Dendritic cell treated with granulocyte-macrophage colony-stimulating factor and Interleukin-4, amounts not matched to agents 40 ng/mL and 50 ng/mL, for 4 days (primary cell): ENCODE measurements at regions of chr13 and their contacts with region 1.

Region 1: GRCh38 chr13:33723772-33724435 is 94.0 kb upstream of the RFC3 start:
- H3K4me3 Mint-ChIP-seq: no peak overlapping the region
- H3K27ac Mint-ChIP-seq: no peak overlapping the region
- H3K4me1 Mint-ChIP-seq: peaks cover 27% of the 10 kb centered on the region
- H3K27me3 Mint-ChIP-seq: no peaks in the 10 kb centered on the region

Region 2: GRCh38 chr13:32586080-32586900 is 1137.6 kb before region 1 on chr13 and contains the start of gene PDS5B:
- intact Hi-C with region 1: loop called (anchors 5 kb)
- H3K4me3 Mint-ChIP-seq: peak within 1 kb of the TSS; percentile 92
- H3K27ac Mint-ChIP-seq: peak within 1 kb of the TSS; percentile 89
- H3K4me1 Mint-ChIP-seq: peaks cover 37% of the 10 kb centered on the region
- H3K27me3 Mint-ChIP-seq: peaks cover 8% of the 10 kb centered on the region

Region 3: DNA sequence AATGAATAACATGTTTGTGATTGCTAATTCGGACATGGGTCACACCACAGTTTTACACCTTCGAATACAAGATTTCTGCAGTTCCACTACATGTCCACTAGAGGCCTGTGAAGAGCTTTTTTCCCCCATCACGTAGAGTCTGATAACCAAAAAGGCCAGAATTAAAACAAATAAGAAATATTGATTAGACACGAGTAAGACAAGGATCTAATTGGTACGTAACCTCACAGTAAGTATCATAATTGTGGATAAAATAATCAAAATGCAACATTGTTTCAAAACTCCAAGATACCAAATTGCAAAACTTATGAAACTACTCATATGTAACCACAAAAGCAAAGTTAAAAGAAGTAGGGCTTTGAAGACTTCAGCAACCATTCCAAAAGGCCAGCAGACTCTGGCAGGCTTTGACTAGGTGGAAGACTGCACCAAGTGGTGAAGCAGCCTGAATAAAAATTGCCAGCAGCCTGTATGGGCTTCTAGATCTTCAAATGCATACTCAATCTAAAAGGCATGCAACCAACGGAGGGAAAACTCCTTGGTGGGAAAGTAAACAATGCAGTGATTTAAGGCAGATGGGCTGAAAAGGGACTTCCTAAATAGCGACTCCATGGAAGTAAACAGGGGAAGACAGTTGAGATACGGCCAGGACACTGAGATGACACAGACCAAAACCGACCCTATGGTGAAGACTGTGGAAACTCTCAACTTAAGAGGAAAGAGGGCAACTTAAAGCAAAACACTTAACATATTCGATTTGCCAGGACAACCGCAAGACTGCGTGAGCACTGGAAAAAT is 495.1 kb before region 1 on chr13:
- intact Hi-C with region 1: loop called (anchors 2 kb)
- H3K4me3 Mint-ChIP-seq: no peak overlapping the region
- H3K27ac Mint-ChIP-seq: no peak overlapping the region
- H3K4me1 Mint-ChIP-seq: peaks cover 13% of the 10 kb centered on the region
- H3K27me3 Mint-ChIP-seq: no peaks in the 10 kb centered on the region

Region 4: DNA sequence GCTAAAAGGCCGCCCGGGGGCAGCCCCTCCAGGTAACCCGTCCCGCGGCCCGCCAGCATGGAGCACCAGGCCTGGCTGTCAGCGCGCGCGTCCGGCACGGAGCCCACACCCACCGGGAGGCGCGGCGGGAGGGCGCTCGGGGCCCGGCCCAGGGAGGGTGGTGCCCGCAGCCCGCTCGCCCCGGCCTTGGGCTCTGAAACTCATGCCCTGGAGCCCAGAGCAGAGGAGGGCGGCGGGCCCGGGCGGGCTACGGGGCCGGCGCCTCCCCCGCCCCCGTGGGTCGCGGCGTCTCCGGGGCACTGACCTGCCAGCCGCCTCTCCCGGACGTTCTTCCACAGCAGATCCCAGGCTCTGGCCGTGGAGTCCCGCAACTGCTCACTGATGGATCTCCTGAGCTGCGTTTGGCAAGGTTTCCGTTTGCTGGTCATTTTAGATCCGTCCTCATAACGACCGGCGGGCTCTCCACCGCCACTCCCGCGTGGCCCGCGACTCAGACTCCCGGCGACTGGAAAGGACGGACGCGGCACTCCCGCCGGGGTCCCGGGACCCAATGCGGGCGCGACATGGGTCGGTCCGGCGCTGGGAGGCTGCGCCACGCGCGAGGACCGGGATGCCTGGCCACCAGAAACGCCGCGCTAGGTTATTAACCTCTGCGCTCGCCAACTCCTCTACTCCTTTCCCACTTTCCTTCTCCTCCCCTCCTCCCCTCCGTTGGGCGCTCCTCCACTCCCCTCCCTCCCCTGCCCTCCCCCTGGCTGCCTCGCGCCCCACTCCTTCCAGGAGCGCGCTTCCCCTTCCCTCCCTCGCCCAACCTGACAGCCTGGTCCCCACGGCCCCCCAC is 373.7 kb before region 1 on chr13:
- intact Hi-C with region 1: loop called (anchors 5 kb)
- H3K4me3 Mint-ChIP-seq: peak overlapping the region; percentile 88
- H3K27ac Mint-ChIP-seq: peak overlapping the region; percentile 84
- H3K4me1 Mint-ChIP-seq: peaks cover 51% of the 10 kb centered on the region
- H3K27me3 Mint-ChIP-seq: peaks cover 11% of the 10 kb centered on the region

Region 5: DNA sequence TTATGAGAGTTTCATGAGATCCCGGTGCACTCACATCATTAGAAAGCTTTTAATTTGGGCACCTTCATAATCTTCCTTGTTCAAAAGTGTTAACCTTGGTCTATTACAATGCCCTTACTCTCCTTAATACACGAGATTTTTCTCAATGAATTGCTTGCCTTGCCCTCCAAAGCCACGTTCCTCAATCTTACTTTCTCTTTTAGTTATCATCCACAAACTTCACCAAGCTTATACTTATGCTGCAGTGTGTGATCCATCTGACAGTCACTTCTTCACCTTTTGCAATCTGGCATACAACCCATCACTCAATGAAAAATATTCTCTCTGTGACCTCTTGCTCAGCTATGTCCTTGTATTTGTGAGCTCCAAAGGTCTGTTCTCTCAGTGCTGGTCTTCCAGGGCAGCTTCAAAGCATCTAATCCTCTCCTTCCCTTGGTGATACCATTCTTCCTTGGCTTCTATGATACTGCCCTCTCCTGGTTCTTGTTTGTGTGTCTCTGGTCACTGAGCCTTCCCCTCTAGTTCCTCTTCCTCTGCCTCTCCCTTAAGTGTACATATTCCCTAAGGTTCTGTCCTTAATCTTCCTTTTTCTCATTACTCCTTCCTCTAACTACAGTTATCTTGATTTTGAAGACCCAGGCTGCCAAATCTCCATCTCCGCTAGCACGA is 236.2 kb before region 1 on chr13:
- intact Hi-C with region 1: loop called (anchors 5 kb)
- H3K4me3 Mint-ChIP-seq: no peak overlapping the region
- H3K27ac Mint-ChIP-seq: no peak overlapping the region
- H3K4me1 Mint-ChIP-seq: peaks cover 9% of the 10 kb centered on the region
- H3K27me3 Mint-ChIP-seq: no peaks in the 10 kb centered on the region

Region 6: DNA sequence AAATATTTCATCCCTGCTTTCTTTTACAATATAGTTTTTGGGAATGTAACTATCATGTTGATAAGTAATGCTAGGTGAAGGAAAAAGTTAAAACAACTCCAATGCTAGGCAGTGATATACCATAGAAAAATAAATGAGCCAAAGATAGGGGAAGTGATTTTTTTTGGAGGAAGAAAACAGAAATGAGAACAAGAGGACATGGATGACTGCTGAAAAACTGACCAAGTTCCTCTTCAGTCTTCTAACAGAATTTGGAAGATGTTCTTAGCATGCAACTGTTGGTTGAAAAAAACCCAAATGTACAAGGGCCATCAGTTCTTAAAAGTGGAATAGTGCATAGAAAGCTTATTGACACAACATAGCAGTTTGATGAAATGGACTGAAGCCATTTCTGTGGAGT is 175.8 kb before region 1 on chr13:
- intact Hi-C with region 1: loop called (anchors 5 kb)
- H3K4me3 Mint-ChIP-seq: no peak overlapping the region
- H3K27ac Mint-ChIP-seq: peak overlapping the region; percentile 68
- H3K4me1 Mint-ChIP-seq: peaks cover 22% of the 10 kb centered on the region
- H3K27me3 Mint-ChIP-seq: no peaks in the 10 kb centered on the region

Region 7: GRCh38 chr13:33799950-33800592 is 76.2 kb after region 1 on chr13:
- intact Hi-C with region 1: no loop called
- H3K4me3 Mint-ChIP-seq: no peak overlapping the region
- H3K27ac Mint-ChIP-seq: no peak overlapping the region
- H3K4me1 Mint-ChIP-seq: peaks cover 21% of the 10 kb centered on the region
- H3K27me3 Mint-ChIP-seq: no peaks in the 10 kb centered on the region

Region 8: DNA sequence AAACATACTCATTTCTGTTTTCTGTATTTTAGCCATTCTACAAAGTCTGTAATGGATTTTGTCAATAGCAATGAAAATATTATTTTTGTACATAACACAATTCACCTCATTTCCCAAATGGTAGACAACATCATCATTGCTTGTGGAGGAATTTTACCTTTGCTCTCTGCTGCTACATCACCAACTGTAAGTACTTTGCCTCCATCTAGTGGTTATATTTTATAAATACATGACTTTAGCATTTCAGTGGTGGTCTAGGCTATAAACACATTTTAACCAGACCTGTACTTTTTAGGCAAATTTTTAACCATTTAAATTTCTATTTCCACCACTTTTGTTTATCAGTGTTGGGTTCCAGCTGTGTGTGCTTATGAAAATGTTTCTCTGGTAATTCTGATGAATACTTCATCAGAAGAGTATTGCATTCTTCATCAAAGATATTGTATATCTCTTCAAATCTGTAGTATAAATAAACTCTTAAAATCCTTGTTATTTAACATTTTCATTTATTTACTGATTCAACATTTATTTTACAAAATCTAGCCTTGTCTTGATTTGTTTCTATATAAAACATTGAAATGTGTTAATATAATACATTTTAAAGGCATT is 1440.5 kb after region 1 on chr13:
- intact Hi-C with region 1: loop called (anchors 10 kb)
- H3K4me3 Mint-ChIP-seq: no peak overlapping the region
- H3K27ac Mint-ChIP-seq: no peak overlapping the region
- H3K4me1 Mint-ChIP-seq: peaks cover 9% of the 10 kb centered on the region
- H3K27me3 Mint-ChIP-seq: no peaks in the 10 kb centered on the region